Mammary epithelial cell (primary cell): ENCODE measurements at regions of chr9 and their contacts with region 1.

Region 1: GRCh38 chr9:98807070-98807810 is at the start of gene GALNT12:
- DNase-seq: no peak
- H3K4me3 ChIP-seq: peak within 1 kb of the TSS; percentile 39 to 50 (median 49)
- H3K27ac ChIP-seq: no peak within 1 kb of the TSS
- H3K4me1 ChIP-seq: peaks cover 43% of the 10 kb centered on the region
- H3K27me3 ChIP-seq: no peaks in the 10 kb centered on the region
- CTCF ChIP-seq: no peak
- total RNA-seq, gene GALNT12: 0.17 to 0.80 TPM

Region 2: GRCh38 chr9:98766586-98766985 is 40.7 kb before region 1 on chr9:
- CTCF ChIA-PET with region 1: no interaction called
- dilution Hi-C with region 1: loop called (anchors 5 kb)
- in situ Hi-C with region 1: no loop called
- intact Hi-C with region 1: no loop called
- DNase-seq: no peak
- H3K4me3 ChIP-seq: no peak overlapping the region
- H3K27ac ChIP-seq: no peak overlapping the region
- H3K4me1 ChIP-seq: peaks cover 9% of the 10 kb centered on the region
- H3K27me3 ChIP-seq: no peaks in the 10 kb centered on the region
- CTCF ChIP-seq: no peak

Region 3: GRCh38 chr9:98848450-98849149 is 41.4 kb after region 1 on chr9:
- CTCF ChIA-PET with region 1: no interaction called
- dilution Hi-C with region 1: no loop called
- in situ Hi-C with region 1: no loop called
- intact Hi-C with region 1: loop called (anchors 1 kb)
- DNase-seq: peak; percentile 97
- H3K4me3 ChIP-seq: peak overlapping the region in 2 of 3 experiments; percentile 7 to 10
- H3K27ac ChIP-seq: no peak overlapping the region
- H3K4me1 ChIP-seq: peaks cover 17% of the 10 kb centered on the region
- H3K27me3 ChIP-seq: no peaks in the 10 kb centered on the region
- CTCF ChIP-seq: peak; percentile 97

Region 4: DNA sequence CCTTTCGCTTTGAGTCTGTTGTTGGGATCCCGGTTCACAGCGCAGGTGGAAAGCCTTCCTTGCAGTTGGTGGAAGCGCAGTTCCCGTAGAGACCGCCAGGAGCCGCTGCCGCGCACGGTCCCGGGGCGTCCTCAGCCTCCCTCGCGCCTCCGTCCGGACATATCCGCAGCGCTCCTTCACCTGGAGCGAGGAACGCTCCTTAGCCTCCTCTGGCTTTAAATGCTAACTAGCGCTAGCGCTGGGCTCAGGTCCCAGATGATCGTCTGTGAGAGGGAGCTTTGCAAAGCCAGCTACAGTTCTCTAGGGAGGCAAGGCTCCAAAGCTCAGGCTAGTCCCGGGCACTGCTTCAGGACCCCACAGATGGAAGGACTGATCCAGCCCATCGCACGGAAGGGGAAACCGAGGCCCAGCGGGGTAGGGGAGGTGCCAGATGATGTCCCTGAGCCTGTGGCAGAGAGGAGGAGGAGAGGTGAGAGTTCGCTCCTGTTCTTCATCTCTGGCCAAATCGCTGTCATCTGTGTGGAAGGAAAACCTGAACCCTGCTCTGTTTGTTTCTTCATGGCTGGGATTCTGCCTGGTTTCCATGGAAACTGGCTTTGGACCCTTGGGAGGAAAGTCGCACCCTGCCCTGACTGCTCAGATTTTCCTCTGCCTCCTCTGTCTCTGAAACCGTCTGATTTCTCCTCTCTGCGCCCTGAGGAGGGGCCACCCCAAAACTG is 167.9 kb after region 1 on chr9:
- CTCF ChIA-PET with region 1: no interaction called
- dilution Hi-C with region 1: no loop called
- in situ Hi-C with region 1: no loop called
- intact Hi-C with region 1: loop called (anchors 1 kb)
- DNase-seq: peak; percentile 66
- H3K4me3 ChIP-seq: peak overlapping the region in 1 of 3 experiments; percentile 10
- H3K27ac ChIP-seq: no peak overlapping the region
- H3K4me1 ChIP-seq: peaks cover 10% of the 10 kb centered on the region
- H3K27me3 ChIP-seq: no peaks in the 10 kb centered on the region
- CTCF ChIP-seq: peak; percentile 96 to 99

Region 5: DNA sequence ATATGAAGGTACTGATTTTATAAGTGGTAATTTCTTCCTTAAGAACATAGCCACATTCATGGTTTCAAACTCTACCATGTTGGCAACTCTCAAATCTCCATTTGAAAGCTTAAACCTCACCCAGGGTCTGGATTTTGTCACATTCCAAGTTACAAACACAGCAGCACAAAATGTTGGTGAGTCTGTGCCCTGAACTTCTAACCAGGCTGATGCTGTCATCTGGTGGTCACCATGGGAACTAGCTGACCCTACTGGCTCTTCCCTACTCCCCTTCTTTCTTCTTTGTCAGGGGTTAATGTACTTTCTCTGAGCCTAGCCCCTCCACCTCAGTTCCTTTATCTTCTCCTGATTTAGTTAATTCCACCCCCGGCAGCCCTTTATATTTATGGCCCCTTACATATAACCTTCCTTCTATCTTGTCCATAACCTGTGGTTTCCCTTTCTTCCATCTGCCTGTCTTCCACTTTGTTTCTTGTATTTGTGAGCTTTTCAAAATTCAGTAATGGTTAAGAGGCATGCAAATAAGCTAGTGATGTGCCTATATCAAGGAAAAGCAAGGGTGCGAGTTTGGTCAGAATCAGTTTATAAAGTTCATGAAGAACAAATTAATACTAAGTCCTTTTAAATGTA is 333.6 kb after region 1 on chr9:
- CTCF ChIA-PET with region 1: no interaction called
- dilution Hi-C with region 1: loop called (anchors 5 kb)
- in situ Hi-C with region 1: no loop called
- intact Hi-C with region 1: loop called (anchors 1 kb)
- DNase-seq: peak; percentile 16
- H3K4me3 ChIP-seq: no peak overlapping the region
- H3K27ac ChIP-seq: no peak overlapping the region
- H3K4me1 ChIP-seq: no peaks in the 10 kb centered on the region
- H3K27me3 ChIP-seq: no peaks in the 10 kb centered on the region
- CTCF ChIP-seq: peak; percentile 92 to 95